ENCODE measurements at regions of chr2 and their contacts with region 1.

Region 1: DNA sequence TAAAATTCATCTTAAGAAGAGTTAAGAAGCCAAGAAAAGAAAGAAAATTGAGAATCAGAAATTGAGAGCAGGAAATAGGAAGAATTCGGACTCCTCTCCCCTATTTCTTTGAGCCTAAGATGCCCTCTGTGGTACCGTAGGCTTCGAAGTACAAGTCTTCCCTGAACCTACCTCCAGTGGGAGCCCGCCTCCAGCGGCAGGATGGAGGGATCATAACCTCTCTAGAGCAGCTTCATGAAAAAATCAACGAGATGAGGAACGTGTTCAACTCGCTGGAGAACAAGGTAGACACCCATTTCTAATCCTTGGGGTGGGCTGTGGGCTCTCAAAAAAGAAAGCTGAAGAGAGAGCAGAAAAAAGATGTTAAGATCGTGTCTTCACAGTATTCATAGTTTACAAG is 36.3 kb downstream of the ARHGEF33 start:
- DNase-seq: peak; percentile 62
- ATAC-seq: peak; percentile 99
- H3K4me3 ChIP-seq: peak overlapping the region in 2 of 3 experiments; percentile 35 to 37; a peak in 5 of 6 replicates
- H3K27ac ChIP-seq: no peak overlapping the region
- H3K4me1 ChIP-seq: peaks cover 34% of the 10 kb centered on the region
- H3K27me3 ChIP-seq: no peaks in the 10 kb centered on the region
- CTCF ChIP-seq: peak; percentile 80
- EP300 ChIP-seq: no peak
- POLR2A ChIP-seq: no peak
- RAD21 ChIP-seq: peak; percentile 75

Region 2: GRCh38 chr2:38875576-38876367 is 50.2 kb before region 1 on chr2 and contains the starts of genes DHX57 and MORN2:
- CTCF ChIA-PET with region 1: no interaction called
- POLR2A ChIA-PET with region 1: no interaction called
- in situ Hi-C with region 1: no loop called
- intact Hi-C with region 1: loop called (anchors 5 kb)
- DNase-seq: peak; percentile 87
- ATAC-seq: peak; percentile 99
- H3K4me3 ChIP-seq: peak within 1 kb of the TSS; percentile 58 to 97 (median 81)
- H3K27ac ChIP-seq: peak within 1 kb of the TSS; percentile 54
- H3K4me1 ChIP-seq: peaks cover 28% of the 10 kb centered on the region
- H3K27me3 ChIP-seq: no peaks in the 10 kb centered on the region; a peak in 1 of 5 replicates
- CTCF ChIP-seq: peak; percentile 14; the same call in 1 of the 2 replicates
- EP300 ChIP-seq: peak in 1 of 2 experiments; percentile 53; a peak in 1 of 4 replicates
- POLR2A ChIP-seq: peak; percentile 75 to 88
- RAD21 ChIP-seq: peak; percentile 48; the same call in 1 of the 2 replicates
- total RNA-seq, gene DHX57: 24.2 and 33.3 TPM in 2 replicates
- total RNA-seq, gene MORN2: 28.0 and 38.6 TPM in 2 replicates

Region 3: GRCh38 chr2:38991899-38992298 is 65.9 kb after region 1 on chr2:
- CTCF ChIA-PET with region 1: no interaction called
- POLR2A ChIA-PET with region 1: no interaction called
- in situ Hi-C with region 1: no loop called
- intact Hi-C with region 1: loop called (anchors 2 kb)
- DNase-seq: no peak
- ATAC-seq: no peak; the same call in 2 of the 3 replicates
- H3K4me3 ChIP-seq: no peak overlapping the region
- H3K27ac ChIP-seq: no peak overlapping the region
- H3K4me1 ChIP-seq: no peaks in the 10 kb centered on the region
- H3K27me3 ChIP-seq: no peaks in the 10 kb centered on the region
- CTCF ChIP-seq: no peak
- EP300 ChIP-seq: no peak
- POLR2A ChIP-seq: no peak
- RAD21 ChIP-seq: no peak